ENCODE measurements at regions of chr5 and their contacts with region 1.

Region 1: GRCh38 chr5:142548739-142549275 is 137.1 kb downstream of the FGF1 start:
- DNase-seq: peak; percentile 36 to 92
- H3K4me3 ChIP-seq: no peak overlapping the region
- H3K27ac ChIP-seq: no peak overlapping the region
- H3K4me1 ChIP-seq: peaks cover 0 to 27% (median 13%) of the 10 kb centered on the region in 4 donors
- H3K27me3 ChIP-seq: peaks cover 0 to 26% (median 10%) of the 10 kb centered on the region in 3 donors
- CTCF ChIP-seq: peak in 5 of 7 experiments; percentile 54 to 81 (median 65)
- EP300 ChIP-seq: no peak
- POLR2A ChIP-seq: no peak

Region 2: GRCh38 chr5:141875795-141876627 is 672.8 kb before region 1 on chr5:
- intact Hi-C with region 1: no loop called
- DNase-seq: peak; percentile 84 to 94
- H3K4me3 ChIP-seq: peak overlapping the region; percentile 74 to 84 (median 78)
- H3K27ac ChIP-seq: peak overlapping the region; percentile 89 to 95 (median 94)
- H3K4me1 ChIP-seq: peaks cover 66 to 98% (median 84%) of the 10 kb centered on the region in 4 donors
- H3K27me3 ChIP-seq: peaks cover 0 to 91% (median 33%) of the 10 kb centered on the region in 3 donors
- CTCF ChIP-seq: no peak
- EP300 ChIP-seq: no peak
- POLR2A ChIP-seq: peak in 1 of 4 donors; percentile 53

Region 3: DNA sequence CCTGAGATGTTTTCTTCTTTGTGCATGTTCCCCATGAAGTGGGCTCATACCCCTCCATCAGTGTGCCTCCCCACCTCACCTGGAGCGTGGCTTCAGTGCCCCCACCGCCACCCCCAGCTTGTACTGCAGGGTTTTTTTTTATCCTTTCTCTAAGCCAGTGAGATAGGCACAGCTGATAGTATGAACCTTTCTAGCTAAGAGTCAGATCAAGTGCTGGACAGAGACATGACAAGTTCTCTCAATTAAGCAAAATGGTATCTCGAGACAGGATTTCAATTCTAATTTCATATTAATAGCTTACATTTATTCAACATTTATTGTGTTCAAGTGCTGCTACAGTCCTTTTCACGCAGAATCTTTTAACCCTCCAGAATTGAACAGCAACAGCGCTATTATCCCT is 384.5 kb before region 1 on chr5:
- intact Hi-C with region 1: loop called (anchors 5 kb)
- DNase-seq: no peak
- H3K4me3 ChIP-seq: no peak overlapping the region
- H3K27ac ChIP-seq: no peak overlapping the region
- H3K4me1 ChIP-seq: peaks cover 1 to 21% (median 13%) of the 10 kb centered on the region in 4 donors
- H3K27me3 ChIP-seq: no peaks in the 10 kb centered on the region
- CTCF ChIP-seq: no peak
- EP300 ChIP-seq: no peak
- POLR2A ChIP-seq: no peak

Region 4: DNA sequence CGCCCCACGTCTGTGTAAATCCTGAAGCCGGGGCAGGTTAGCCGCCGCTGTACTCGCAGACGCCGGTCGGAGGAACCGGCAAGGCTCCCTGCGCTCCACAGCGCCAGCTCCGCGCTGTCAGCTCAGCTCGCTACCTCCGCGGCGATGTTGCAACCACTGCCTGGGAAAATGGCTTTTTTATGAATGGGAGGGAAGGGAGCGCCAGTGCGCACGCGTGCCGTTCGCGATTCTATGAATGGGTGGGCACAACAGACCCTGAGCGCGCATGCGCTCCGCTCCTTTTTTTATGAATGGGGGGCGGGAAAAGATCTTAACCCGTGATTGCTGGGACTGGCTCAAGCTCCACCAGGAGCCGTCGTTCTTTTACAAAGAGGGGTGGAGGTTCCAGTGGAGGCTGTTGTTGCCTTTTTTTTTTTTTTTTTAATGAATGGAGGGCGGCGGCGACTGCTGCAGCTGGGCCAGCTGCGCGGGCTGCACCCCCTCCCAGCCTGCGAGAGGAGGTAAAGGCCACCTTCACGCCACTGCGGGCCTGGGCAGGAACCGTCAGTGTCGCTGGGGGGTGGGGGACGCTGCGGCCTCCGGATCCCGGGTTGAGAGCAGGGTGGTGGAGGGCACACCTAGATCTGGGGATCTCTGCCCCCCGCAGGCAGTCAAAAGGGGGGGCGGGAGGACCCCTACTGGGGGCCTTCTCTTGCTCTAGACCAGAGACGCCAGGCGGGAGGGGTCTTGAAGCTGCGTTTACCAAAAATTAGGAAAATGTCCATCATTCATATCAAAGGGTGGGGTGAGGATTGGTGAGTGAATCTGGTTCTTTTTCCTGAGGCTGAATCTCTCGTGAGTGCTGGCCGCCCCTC is 223.7 kb before region 1 on chr5 and contains the start of gene SPRY4:
- intact Hi-C with region 1: loop called (anchors 10 kb)
- DNase-seq: peak; percentile 89 to 98
- H3K4me3 ChIP-seq: peak within 1 kb of the TSS; percentile 51 to 67 (median 60)
- H3K27ac ChIP-seq: peak within 1 kb of the TSS; percentile 75 to 89 (median 88)
- H3K4me1 ChIP-seq: peaks cover 24 to 64% (median 59%) of the 10 kb centered on the region in 4 donors
- H3K27me3 ChIP-seq: peaks cover 0 to 76% (median 25%) of the 10 kb centered on the region in 3 donors
- CTCF ChIP-seq: no peak
- EP300 ChIP-seq: no peak
- POLR2A ChIP-seq: peak in 1 of 4 donors; percentile 74
- total RNA-seq, gene SPRY4: 2.9 to 13.6 (median 10.7) TPM

Region 5: DNA sequence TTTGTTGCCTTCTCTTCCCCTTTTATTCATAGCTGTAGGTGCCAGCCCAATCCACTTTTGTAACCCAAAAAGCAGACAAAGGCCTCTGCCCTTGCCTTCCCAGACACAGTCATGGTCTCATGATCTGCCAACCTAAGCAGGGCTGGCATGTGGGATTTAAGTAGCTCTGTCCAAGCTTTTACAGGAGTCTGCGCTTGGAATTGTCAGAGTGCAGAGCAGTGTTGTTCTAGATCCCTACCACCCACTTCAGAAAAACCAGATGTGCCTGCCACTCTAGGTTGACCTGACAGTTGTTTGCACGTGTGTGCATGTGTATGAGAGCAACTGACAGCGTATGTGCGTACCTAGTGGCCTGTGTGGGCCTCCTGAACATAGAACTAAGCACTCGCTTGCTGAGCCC is 136.2 kb before region 1 on chr5:
- intact Hi-C with region 1: no loop called
- DNase-seq: no peak
- H3K4me3 ChIP-seq: no peak overlapping the region
- H3K27ac ChIP-seq: no peak overlapping the region
- H3K4me1 ChIP-seq: no peaks in the 10 kb centered on the region
- H3K27me3 ChIP-seq: no peaks in the 10 kb centered on the region
- CTCF ChIP-seq: no peak
- EP300 ChIP-seq: no peak
- POLR2A ChIP-seq: no peak

Region 6: GRCh38 chr5:142847881-142848790 is 299.3 kb after region 1 on chr5:
- intact Hi-C with region 1: no loop called
- DNase-seq: no peak
- H3K4me3 ChIP-seq: no peak overlapping the region
- H3K27ac ChIP-seq: no peak overlapping the region
- H3K4me1 ChIP-seq: peaks cover 37 to 76% (median 45%) of the 10 kb centered on the region in 4 donors
- H3K27me3 ChIP-seq: no peaks in the 10 kb centered on the region
- CTCF ChIP-seq: no peak
- EP300 ChIP-seq: no peak
- POLR2A ChIP-seq: no peak

Region 7: GRCh38 chr5:143118222-143118621 is 569.4 kb after region 1 on chr5:
- intact Hi-C with region 1: no loop called
- DNase-seq: no peak
- H3K4me3 ChIP-seq: no peak overlapping the region
- H3K27ac ChIP-seq: no peak overlapping the region
- H3K4me1 ChIP-seq: peaks cover 0 to 14% (median 0%) of the 10 kb centered on the region in 4 donors
- H3K27me3 ChIP-seq: no peaks in the 10 kb centered on the region
- CTCF ChIP-seq: no peak
- EP300 ChIP-seq: no peak
- POLR2A ChIP-seq: no peak

Measured in stomach (tissue), 19 donors.